Left cardiac atrium (tissue), 4 donors: ENCODE measurements at regions of chr1 and their contacts with region 1.

Region 1: DNA sequence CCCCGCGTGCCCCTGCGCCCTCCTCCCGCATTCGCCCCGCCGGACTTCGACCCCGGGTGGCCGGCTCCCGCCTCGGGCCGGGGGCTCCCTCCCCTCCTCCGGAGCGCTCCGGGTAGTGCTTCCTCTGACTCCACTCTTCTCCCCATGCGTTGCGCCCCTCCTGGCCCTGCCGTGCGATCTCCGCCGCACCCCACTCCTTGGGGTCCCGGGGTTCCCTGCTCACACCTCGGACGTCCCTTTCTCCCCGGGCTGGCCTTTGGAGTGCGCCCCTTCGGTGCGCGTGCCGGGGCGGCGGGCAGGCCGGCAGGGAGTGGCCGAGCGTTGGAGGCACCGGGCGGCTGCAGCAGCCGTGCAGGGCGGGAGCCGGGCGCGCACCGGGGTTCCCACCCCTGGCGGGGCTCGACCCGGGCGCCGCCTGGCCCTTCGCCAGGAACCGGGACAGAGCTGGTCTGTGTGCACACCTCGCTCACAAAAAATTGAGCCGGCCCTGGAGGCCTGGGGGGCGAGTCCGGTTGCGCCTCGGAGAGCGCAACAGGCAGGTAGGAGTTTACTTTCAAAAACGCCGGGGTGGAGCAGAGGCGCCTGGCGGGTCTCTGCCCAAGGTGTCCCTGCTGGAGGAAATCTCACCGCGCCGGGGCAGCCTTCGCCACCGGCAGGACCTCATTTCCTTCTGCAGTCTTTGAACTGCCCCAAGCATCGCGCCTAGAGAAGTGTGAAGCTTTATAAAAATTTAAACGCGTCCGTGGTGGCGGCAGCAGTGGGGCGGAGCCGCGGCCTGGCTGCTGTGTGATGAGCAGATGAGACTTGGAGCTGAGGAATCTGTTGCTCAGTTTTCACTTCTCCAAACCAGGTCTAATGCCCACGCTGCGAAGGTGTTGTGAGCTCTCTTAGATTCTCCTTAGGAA is 650 bp downstream of the VANGL1 start:
- DNase-seq: peak; percentile 59
- ATAC-seq: peak; percentile 75 to 79

Region 2: DNA sequence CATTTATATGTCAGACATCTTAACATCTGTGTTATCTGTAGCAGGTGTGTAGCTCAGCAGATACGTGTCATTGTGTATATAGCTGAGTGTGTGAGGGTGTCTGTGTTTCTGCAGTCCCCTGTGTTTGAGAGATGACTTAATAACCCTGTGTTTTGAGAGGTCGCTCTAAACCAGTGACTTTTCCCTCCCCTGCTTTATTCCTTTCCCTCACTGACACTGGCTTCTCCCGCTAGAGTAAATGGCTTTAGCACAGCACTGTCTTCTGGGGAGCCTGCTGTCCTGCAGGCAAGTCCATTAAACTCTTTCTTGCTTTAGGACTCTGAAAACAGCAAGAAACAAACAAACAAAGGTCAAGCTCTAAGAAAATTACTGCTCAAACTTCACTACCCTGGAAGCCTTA is 52.4 kb after region 1 on chr1:
- intact Hi-C with region 1: loop called in 1 of 2 experiments (anchors 10 kb)
- DNase-seq: no peak
- ATAC-seq: no peak

Region 3: DNA sequence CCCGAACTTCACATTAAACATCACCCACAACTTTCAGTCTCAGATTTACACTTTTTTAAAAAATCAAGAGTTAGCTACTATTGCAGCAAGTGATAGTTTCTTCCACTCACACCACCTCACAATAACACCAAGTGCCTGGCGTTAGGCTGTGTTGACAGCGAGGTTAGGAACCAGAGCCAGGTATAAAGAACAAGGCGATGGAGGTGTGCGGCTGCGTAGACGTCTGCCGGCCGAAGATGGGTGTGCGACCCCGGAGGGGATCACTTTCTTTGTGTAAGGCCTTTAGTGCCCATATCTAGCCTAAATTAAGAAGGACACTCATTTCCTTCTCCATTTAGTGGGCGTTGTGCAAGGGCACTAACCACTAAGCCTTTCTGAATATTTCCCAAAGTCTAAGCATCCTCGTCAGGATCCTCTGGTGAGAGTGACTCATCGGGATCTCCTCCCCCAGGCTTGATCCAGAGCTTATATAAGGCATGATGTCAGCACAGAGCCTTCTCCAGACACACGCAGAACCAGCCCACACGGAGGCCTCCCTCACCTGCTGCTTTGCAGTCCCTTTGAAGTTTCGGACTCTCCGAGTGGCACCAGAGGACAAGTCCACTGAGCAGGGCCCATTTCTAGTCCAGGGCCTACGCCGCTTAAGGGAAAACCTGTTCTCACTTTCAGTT is 186.7 kb after region 1 on chr1:
- intact Hi-C with region 1: no loop called
- DNase-seq: peak; percentile 37
- ATAC-seq: peak in 1 of 2 donors; percentile 94

Region 4: DNA sequence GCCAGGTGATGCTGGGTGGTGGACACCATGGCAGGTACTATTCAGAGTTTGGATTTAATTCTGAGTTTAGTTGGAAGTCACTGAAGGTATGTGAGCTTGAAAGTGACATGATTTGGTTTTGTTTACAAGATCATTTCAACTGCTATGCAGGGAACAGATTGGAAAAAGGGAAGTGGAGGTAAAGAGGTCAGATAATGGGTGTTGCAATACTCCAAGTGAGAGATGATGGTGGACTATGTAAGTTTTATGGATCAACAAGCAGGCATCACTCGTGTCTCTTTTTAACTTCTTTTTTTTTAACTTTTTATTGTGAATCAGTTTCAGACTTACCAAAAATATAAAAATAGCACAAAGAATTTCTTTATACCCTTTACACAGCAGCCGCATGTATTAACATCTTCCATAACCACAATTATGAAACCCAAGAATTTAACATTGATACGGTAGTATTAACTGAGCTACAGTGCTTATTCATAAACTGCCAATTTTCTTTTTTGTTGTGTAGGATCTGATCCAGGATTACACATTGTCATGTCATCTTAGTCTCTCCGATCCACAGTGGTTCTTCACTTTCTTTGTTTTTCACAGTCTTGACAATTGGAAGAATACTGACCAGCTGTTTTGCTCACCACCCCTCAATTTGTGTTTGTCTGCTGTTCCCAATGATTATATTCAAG is 223.4 kb after region 1 on chr1:
- intact Hi-C with region 1: no loop called
- DNase-seq: no peak
- ATAC-seq: no peak